ENCODE measurements at regions of chr19 and their contacts with region 1.

Region 1: GRCh38 chr19:38374429-38375176 is at the start of gene PSMD8:
- DNase-seq: peak; percentile 99
- H3K4me3 Mint-ChIP-seq: peak within 1 kb of the TSS; percentile 86
- H3K27ac Mint-ChIP-seq: peak within 1 kb of the TSS; percentile 87
- H3K4me1 Mint-ChIP-seq: peaks cover 22% of the 10 kb centered on the region
- H3K27me3 Mint-ChIP-seq: no peaks in the 10 kb centered on the region
- total RNA-seq, gene PSMD8: 214 to 224 TPM

Region 2: DNA sequence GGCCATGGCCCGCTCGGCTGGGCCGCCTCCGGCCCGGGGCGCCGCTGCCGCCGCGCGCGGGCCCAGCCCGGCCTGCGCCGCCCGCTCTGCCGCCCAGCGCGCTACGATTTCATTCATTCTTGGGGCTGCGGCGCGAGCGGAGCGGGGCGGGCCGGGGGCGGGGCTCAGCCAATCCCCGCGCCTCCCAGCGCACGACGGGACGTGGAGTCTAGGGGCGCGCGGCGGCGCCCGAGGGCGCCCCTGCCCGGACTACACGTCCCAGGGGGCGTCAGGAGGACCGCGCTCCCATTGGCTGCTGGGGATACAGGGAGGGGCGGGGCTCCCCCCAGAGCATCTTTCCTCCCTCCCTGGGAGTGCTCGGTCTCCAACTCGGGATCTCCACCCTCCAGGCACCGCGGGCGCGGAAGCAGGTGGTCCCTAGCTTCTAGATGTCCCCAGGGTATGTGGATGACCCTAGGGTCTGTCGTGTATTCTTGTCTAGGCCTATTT is 145.0 kb before region 1 on chr19:
- CTCF ChIA-PET with region 1: interaction called, 12 read pairs
- POLR2A ChIA-PET with region 1: interaction called, 4 read pairs
- intact Hi-C with region 1: no loop called
- DNase-seq: peak; percentile 83
- H3K4me3 Mint-ChIP-seq: no peak overlapping the region
- H3K27ac Mint-ChIP-seq: no peak overlapping the region
- H3K4me1 Mint-ChIP-seq: peaks cover 12% of the 10 kb centered on the region
- H3K27me3 Mint-ChIP-seq: peaks cover 43% of the 10 kb centered on the region

Region 3: DNA sequence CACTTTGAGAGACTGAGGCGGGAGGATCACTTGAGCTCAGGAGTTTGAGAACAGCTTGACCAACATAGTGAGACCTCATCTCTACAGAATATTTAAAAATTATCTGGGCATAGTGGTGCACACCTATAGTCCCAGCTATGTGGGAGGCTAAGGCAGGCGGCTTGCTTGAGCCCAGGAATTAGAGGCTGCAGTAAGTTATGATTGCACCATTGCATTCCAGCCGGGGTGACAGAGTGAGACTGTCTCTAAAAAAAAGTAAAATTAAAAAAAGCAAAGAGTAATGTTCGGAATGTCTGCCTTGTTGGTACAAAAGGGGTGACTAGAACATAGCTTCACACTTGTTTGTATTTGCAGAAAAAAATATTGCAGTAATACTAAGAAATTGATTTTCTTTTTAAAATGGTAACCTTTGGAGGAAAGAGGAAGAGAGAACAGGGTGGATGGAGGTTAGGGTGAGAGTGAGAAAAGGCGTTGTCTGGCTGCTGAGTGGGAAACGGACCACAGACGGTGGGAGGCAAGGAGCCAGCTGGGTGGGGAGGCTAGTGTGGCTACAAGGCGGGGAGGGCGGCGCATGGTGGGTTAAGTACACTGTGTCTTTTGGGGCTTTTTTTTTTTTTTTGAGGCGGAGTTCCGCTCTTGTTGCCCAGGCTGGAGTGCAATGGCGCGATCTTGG is 128.6 kb before region 1 on chr19:
- CTCF ChIA-PET with region 1: interaction called, 20 read pairs
- POLR2A ChIA-PET with region 1: no interaction called
- intact Hi-C with region 1: no loop called
- DNase-seq: no peak
- H3K4me3 Mint-ChIP-seq: no peak overlapping the region
- H3K27ac Mint-ChIP-seq: no peak overlapping the region
- H3K4me1 Mint-ChIP-seq: peaks cover 2% of the 10 kb centered on the region
- H3K27me3 Mint-ChIP-seq: no peaks in the 10 kb centered on the region

Region 4: GRCh38 chr19:38315657-38316476 is 58.7 kb before region 1 on chr19 and contains the start of gene YIF1B:
- CTCF ChIA-PET with region 1: interaction called, 3 read pairs
- POLR2A ChIA-PET with region 1: no interaction called
- intact Hi-C with region 1: loop called (anchors 1 kb)
- DNase-seq: peak; percentile 98
- H3K4me3 Mint-ChIP-seq: peak within 1 kb of the TSS; percentile 83
- H3K27ac Mint-ChIP-seq: peak within 1 kb of the TSS; percentile 88
- H3K4me1 Mint-ChIP-seq: peaks cover 38% of the 10 kb centered on the region
- H3K27me3 Mint-ChIP-seq: no peaks in the 10 kb centered on the region
- total RNA-seq, gene YIF1B: 79.7 to 82.3 TPM

Region 5: GRCh38 chr19:38387550-38388348 is 13.1 kb after region 1 on chr19 and contains the start of gene GGN:
- CTCF ChIA-PET with region 1: interaction called, 6 read pairs
- POLR2A ChIA-PET with region 1: interaction called, 28 read pairs
- intact Hi-C with region 1: loop called (anchors 1 kb)
- DNase-seq: peak; percentile 92
- H3K4me3 Mint-ChIP-seq: peak within 1 kb of the TSS; percentile 78
- H3K27ac Mint-ChIP-seq: peak within 1 kb of the TSS; percentile 69
- H3K4me1 Mint-ChIP-seq: peaks cover 25% of the 10 kb centered on the region
- H3K27me3 Mint-ChIP-seq: peaks cover 3% of the 10 kb centered on the region
- total RNA-seq, gene GGN: 0.41 to 1.2 TPM

Region 6: GRCh38 chr19:38394488-38394887 is 19.9 kb after region 1 on chr19:
- CTCF ChIA-PET with region 1: interaction called, 11 read pairs
- POLR2A ChIA-PET with region 1: interaction called, 5 read pairs
- intact Hi-C with region 1: no loop called
- DNase-seq: peak; percentile 86
- H3K4me3 Mint-ChIP-seq: peak overlapping the region; percentile 73
- H3K27ac Mint-ChIP-seq: peak overlapping the region; percentile 49
- H3K4me1 Mint-ChIP-seq: peaks cover 26% of the 10 kb centered on the region
- H3K27me3 Mint-ChIP-seq: no peaks in the 10 kb centered on the region